ENCODE measurements at regions of chr1 and their contacts with region 1.

Region 1: GRCh38 chr1:207935166-207935583 is 24.2 kb upstream of the CD34 start:
- DNase-seq: peak; percentile 87
- ATAC-seq: peak; percentile 99
- H3K4me3 ChIP-seq: no peak overlapping the region
- H3K27ac ChIP-seq: no peak overlapping the region
- H3K4me1 ChIP-seq: peaks cover 5% of the 10 kb centered on the region; the same call in 1 of the 2 replicates
- H3K27me3 ChIP-seq: no peaks in the 10 kb centered on the region; a peak in 1 of 4 replicates
- CTCF ChIP-seq: no peak
- EP300 ChIP-seq: peak; percentile 53 to 63; a peak in 1 of 4 replicates
- POLR2A ChIP-seq: no peak
- RAD21 ChIP-seq: no peak

Region 2: GRCh38 chr1:207848234-207848633 is 86.9 kb before region 1 on chr1:
- CTCF ChIA-PET with region 1: no interaction called
- POLR2A ChIA-PET with region 1: no interaction called
- RAD21 ChIA-PET with region 1: no interaction called
- SMC1A ChIA-PET with region 1: no interaction called
- in situ Hi-C with region 1: no loop called
- intact Hi-C with region 1: no loop called
- DNase-seq: no peak
- ATAC-seq: peak; percentile 85
- H3K4me3 ChIP-seq: no peak overlapping the region
- H3K27ac ChIP-seq: 0 out of 2 replicates have a peak overlapping the region, but pooled peaks have one; percentile 27
- H3K4me1 ChIP-seq: peaks cover 3% of the 10 kb centered on the region; the same call in 1 of the 2 replicates
- H3K27me3 ChIP-seq: no peaks in the 10 kb centered on the region
- CTCF ChIP-seq: no peak
- EP300 ChIP-seq: no peak
- POLR2A ChIP-seq: no peak
- RAD21 ChIP-seq: no peak

Region 3: GRCh38 chr1:207946756-207947155 is 11.6 kb after region 1 on chr1:
- CTCF ChIA-PET with region 1: interaction called, 12 read pairs
- POLR2A ChIA-PET with region 1: interaction called, 3 read pairs
- RAD21 ChIA-PET with region 1: interaction called, 4 read pairs
- SMC1A ChIA-PET with region 1: interaction called, 8 read pairs
- in situ Hi-C with region 1: no loop called
- intact Hi-C with region 1: no loop called
- DNase-seq: no peak
- ATAC-seq: no peak
- H3K4me3 ChIP-seq: no peak overlapping the region
- H3K27ac ChIP-seq: no peak overlapping the region
- H3K4me1 ChIP-seq: no peaks in the 10 kb centered on the region
- H3K27me3 ChIP-seq: peaks cover 1 to 3% of the 10 kb centered on the region in 2 experiments; a peak in 2 of 4 replicates
- CTCF ChIP-seq: no peak
- EP300 ChIP-seq: no peak
- POLR2A ChIP-seq: no peak
- RAD21 ChIP-seq: no peak